Activated naive CD4-positive, alpha-beta T cell treated with anti-CD3 and anti-CD28 coated beads for 36 hours (primary cell): ENCODE measurements at regions of chr7 and their contacts with region 1.

Region 1: GRCh38 chr7:50266635-50267386 is 37.7 kb upstream of the IKZF1 start:
- DNase-seq: peak; percentile 84
- H3K4me3 Mint-ChIP-seq: peak overlapping the region; percentile 55
- H3K27ac Mint-ChIP-seq: peak overlapping the region; percentile 94
- H3K4me1 Mint-ChIP-seq: peaks cover 91% of the 10 kb centered on the region
- H3K27me3 Mint-ChIP-seq: no peaks in the 10 kb centered on the region

Region 2: GRCh38 chr7:50147951-50148808 is 118.6 kb before region 1 on chr7:
- CTCF ChIA-PET with region 1: interaction called, 3 read pairs
- intact Hi-C with region 1: loop called (anchors 1 kb)
- DNase-seq: peak; percentile 73
- H3K4me3 Mint-ChIP-seq: peak overlapping the region; percentile 34
- H3K27ac Mint-ChIP-seq: peak overlapping the region; percentile 91
- H3K4me1 Mint-ChIP-seq: peaks cover 91% of the 10 kb centered on the region
- H3K27me3 Mint-ChIP-seq: no peaks in the 10 kb centered on the region

Region 3: GRCh38 chr7:50251765-50252164 is 15.0 kb before region 1 on chr7:
- CTCF ChIA-PET with region 1: interaction called, 3 read pairs
- intact Hi-C with region 1: loop called (anchors 1 kb)
- DNase-seq: no peak
- H3K4me3 Mint-ChIP-seq: no peak overlapping the region
- H3K27ac Mint-ChIP-seq: no peak overlapping the region
- H3K4me1 Mint-ChIP-seq: peaks cover 20% of the 10 kb centered on the region
- H3K27me3 Mint-ChIP-seq: no peaks in the 10 kb centered on the region

Region 4: GRCh38 chr7:50304158-50304910 is 37.5 kb after region 1 on chr7 and contains the start of gene IKZF1:
- CTCF ChIA-PET with region 1: interaction called, 9 read pairs
- intact Hi-C with region 1: loop called (anchors 1 kb)
- DNase-seq: peak; percentile 74
- H3K4me3 Mint-ChIP-seq: peak within 1 kb of the TSS; percentile 95
- H3K27ac Mint-ChIP-seq: peak within 1 kb of the TSS; percentile 99
- H3K4me1 Mint-ChIP-seq: peaks cover 34% of the 10 kb centered on the region
- H3K27me3 Mint-ChIP-seq: no peaks in the 10 kb centered on the region
- total RNA-seq, gene IKZF1: 213 to 226 TPM

Region 5: GRCh38 chr7:50335795-50336754 is 69.3 kb after region 1 on chr7:
- CTCF ChIA-PET with region 1: no interaction called
- intact Hi-C with region 1: loop called (anchors 1 kb)
- DNase-seq: peak; percentile 91
- H3K4me3 Mint-ChIP-seq: no peak overlapping the region
- H3K27ac Mint-ChIP-seq: no peak overlapping the region
- H3K4me1 Mint-ChIP-seq: peaks cover 2% of the 10 kb centered on the region
- H3K27me3 Mint-ChIP-seq: no peaks in the 10 kb centered on the region

Region 6: GRCh38 chr7:51209426-51209825 is 942.6 kb after region 1 on chr7:
- CTCF ChIA-PET with region 1: no interaction called
- intact Hi-C with region 1: no loop called
- DNase-seq: no peak
- H3K4me3 Mint-ChIP-seq: no peak overlapping the region
- H3K27ac Mint-ChIP-seq: no peak overlapping the region
- H3K4me1 Mint-ChIP-seq: no peaks in the 10 kb centered on the region
- H3K27me3 Mint-ChIP-seq: no peaks in the 10 kb centered on the region